ENCODE measurements at regions of chr7 and their contacts with region 1.

Region 1: DNA sequence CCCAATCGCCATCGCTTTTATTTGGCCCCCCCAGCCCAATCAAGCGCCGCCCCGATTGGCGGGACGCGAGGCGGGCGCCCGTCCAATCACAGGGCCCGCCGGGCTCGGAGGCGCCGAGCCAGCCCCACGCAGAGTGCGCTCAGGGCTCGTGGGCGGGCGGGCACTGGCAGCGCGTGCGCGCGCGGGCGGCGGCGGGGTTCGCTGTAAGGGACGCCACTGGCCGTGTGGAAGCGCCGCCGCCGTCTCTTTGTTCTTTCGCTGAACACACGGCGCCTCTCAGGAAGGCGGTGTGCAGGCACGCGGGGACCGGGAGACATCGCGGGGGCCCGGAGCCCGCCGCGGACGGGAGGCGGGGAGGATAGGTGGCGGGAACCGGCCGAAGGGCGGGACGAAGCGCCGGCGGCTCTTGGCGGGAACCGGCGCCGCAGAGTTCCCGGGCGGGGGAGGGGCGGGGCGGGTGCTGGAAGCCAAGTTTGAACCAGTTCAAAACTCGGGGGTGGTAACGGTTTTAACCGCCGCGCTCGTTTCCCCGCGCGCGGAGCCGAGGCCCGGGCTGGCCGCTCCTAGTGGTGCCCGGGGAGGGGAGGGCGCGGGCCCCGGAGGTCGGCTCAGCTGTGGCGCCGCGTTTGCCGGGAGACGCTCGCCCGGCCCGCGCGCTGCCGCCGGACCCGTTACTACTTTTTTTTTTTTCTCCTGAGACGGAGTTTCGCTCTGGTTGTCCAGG is 370 bp upstream of the EZH2 start:
- DNase-seq: peak; percentile 86 to 99 (median 92)

Region 2: DNA sequence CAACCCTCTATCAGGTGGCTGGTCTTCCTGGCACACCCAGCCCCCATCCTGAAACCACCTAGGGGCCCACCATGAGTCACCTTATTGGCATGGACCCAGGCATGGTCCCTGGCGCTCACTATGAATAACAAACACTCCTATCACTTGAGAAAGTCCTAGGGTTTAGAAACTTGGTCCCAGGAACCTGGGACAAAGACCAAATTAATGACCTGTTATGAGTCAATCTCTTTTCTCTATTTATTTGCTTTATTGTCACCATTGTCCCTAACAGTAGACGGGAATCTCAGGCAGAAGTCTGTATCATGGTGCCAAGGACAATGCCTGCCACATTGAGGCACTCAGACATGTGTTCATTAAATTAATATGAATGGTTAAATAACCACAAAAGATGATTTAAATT is 893.5 kb before region 1 on chr7:
- intact Hi-C with region 1: no loop called
- DNase-seq: no peak

Region 3: GRCh38 chr7:148940702-148941597 is 56.5 kb after region 1 on chr7:
- intact Hi-C with region 1: loop called (anchors 2 kb)
- DNase-seq: peak; percentile 49 to 95 (median 64)

Region 4: DNA sequence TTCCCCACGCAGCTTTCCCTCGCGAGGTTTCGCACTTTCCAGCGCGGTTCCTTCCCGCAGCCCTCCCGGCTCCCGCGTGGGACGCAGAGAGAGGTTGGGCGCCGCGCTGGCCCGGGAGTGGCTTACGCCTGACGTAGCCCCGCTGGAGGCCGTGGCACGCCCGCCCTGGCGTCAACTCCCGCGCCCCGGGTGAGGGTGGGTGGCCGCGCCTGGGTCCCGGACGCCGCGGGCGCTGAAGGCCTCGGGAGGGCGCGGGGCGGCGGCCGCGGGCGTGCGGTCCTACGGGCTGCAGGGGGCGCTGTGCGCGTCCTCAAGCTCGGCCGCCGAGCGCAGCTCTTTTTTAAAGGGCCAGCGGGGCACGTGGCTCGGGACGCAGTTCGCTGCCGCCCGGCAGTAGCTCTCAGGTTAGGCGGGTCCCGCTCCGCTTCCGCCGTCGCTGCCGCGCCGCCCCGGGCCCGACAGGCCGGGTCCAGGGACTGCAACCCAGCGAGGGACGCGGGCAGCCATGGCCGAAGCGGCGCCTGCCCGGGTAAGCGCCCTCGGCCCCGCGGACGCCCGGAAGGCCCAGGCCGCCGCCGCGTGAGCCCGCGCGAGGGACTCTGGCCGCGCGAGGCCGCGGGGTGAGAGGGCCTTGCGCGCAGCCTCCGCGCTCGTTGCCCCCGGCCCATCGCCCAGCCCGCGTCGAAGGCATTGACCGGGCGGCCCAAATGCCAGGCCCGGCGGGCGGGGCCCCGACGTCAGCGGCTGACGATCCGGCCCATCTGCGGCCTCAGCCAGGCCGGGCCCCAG is 377.6 kb after region 1 on chr7 and contains the start of gene ZNF783:
- intact Hi-C with region 1: no loop called
- DNase-seq: peak; percentile 72 to 97 (median 82)

Measured in posterior cingulate gyrus (tissue), 11 donors.